Tibial artery (tissue), 4 donors: ENCODE measurements at regions of chr12 and their contacts with region 1.

Region 1: DNA sequence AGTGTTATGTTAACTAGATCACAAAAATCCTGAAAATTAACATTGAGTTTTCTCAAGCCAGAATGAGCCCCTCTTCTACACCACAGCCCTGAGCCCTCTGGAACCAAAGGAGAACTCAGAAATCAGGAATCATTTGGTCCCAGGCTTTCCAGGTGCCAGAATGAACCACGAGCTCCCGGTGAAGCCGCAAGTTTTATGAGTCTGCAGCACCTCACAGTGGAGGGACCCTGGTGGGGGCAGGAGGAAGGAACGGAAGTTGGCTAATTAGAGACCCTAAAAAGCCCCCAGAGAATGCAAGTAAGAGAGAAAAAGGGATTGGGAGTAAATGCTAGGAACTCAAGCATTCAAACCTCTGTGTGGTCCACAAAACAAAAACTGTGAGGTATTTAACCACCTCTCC is 52.9 kb upstream of the BCL2L14 start:
- DNase-seq: no peak
- H3K4me3 ChIP-seq: no peak overlapping the region
- H3K27ac ChIP-seq: no peak overlapping the region
- H3K4me1 ChIP-seq: peaks cover 0 to 19% (median 8%) of the 10 kb centered on the region in 4 donors
- H3K27me3 ChIP-seq: no peaks in the 10 kb centered on the region
- CTCF ChIP-seq: peak in 1 of 2 experiments; percentile 16

Region 2: GRCh38 chr12:11592484-11592883 is 425.3 kb before region 1 on chr12:
- intact Hi-C with region 1: loop called (anchors 5 kb)
- DNase-seq: no peak
- H3K4me3 ChIP-seq: no peak overlapping the region
- H3K27ac ChIP-seq: no peak overlapping the region
- H3K4me1 ChIP-seq: no peaks in the 10 kb centered on the region
- H3K27me3 ChIP-seq: no peaks in the 10 kb centered on the region
- CTCF ChIP-seq: no peak

Region 3: GRCh38 chr12:11641522-11641921 is 376.3 kb before region 1 on chr12:
- intact Hi-C with region 1: loop called (anchors 5 kb)
- DNase-seq: no peak
- H3K4me3 ChIP-seq: no peak overlapping the region
- H3K27ac ChIP-seq: no peak overlapping the region
- H3K4me1 ChIP-seq: no peaks in the 10 kb centered on the region
- H3K27me3 ChIP-seq: no peaks in the 10 kb centered on the region
- CTCF ChIP-seq: no peak

Region 4: DNA sequence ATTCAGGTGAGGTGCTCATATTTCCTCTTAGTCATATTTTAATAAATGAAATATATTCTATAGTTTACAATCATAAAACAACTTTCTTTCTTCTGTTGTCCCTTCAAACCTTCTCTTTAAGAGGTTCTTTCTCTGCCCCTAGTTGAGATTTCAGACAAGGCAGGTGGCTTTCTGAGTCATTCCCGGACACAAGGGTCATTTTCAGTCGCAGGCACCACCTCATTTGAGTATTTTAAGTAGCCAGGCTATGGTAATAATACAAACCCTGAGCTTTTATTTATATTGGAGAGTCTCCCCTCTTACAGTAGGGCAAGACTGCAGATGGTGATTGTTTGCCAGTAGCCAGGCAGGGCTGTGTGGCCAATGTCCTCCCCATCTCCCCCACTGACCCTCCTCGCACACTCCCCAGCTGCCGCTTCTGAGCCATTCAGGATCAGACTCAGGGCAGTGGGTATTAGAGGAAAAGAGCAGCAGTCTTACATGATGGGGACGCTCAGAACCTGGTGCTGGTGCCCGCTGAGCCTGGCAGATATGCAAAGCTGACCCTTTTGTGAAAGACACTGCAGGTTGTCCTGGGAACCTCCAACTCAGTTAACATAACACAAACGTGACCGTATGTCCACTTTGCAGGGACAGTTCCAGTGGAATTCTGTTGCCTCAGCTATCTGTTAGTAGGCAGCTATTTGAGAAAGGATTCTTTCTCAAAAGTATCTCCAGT is 48.2 kb before region 1 on chr12:
- intact Hi-C with region 1: no loop called
- DNase-seq: no peak
- H3K4me3 ChIP-seq: no peak overlapping the region
- H3K27ac ChIP-seq: no peak overlapping the region
- H3K4me1 ChIP-seq: no peaks in the 10 kb centered on the region
- H3K27me3 ChIP-seq: no peaks in the 10 kb centered on the region
- CTCF ChIP-seq: no peak